IMR-90 (cell line): ENCODE measurements at regions of chr14 and their contacts with region 1.

Region 1: GRCh38 chr14:93173943-93174395 is 10.7 kb downstream of the MOAP1 start:
- DNase-seq: peak; percentile 22
- ATAC-seq: peak; percentile 42
- H3K4me3 ChIP-seq: no peak overlapping the region
- H3K27ac ChIP-seq: no peak overlapping the region
- H3K4me1 ChIP-seq: no peaks in the 10 kb centered on the region
- H3K27me3 ChIP-seq: peaks cover 9% of the 10 kb centered on the region
- CTCF ChIP-seq: no peak
- POLR2A ChIP-seq: no peak
- RAD21 ChIP-seq: no peak

Region 2: GRCh38 chr14:93375673-93376156 is 201.7 kb after region 1 on chr14:
- CTCF ChIA-PET with region 1: no interaction called
- POLR2A ChIA-PET with region 1: interaction called, 17 read pairs
- dilution Hi-C with region 1: no loop called
- in situ Hi-C with region 1: no loop called
- intact Hi-C with region 1: no loop called
- DNase-seq: no peak
- ATAC-seq: no peak
- H3K4me3 ChIP-seq: no peak overlapping the region
- H3K27ac ChIP-seq: no peak overlapping the region
- H3K4me1 ChIP-seq: no peaks in the 10 kb centered on the region
- H3K27me3 ChIP-seq: no peaks in the 10 kb centered on the region
- CTCF ChIP-seq: no peak
- POLR2A ChIP-seq: no peak
- RAD21 ChIP-seq: no peak

Region 3: DNA sequence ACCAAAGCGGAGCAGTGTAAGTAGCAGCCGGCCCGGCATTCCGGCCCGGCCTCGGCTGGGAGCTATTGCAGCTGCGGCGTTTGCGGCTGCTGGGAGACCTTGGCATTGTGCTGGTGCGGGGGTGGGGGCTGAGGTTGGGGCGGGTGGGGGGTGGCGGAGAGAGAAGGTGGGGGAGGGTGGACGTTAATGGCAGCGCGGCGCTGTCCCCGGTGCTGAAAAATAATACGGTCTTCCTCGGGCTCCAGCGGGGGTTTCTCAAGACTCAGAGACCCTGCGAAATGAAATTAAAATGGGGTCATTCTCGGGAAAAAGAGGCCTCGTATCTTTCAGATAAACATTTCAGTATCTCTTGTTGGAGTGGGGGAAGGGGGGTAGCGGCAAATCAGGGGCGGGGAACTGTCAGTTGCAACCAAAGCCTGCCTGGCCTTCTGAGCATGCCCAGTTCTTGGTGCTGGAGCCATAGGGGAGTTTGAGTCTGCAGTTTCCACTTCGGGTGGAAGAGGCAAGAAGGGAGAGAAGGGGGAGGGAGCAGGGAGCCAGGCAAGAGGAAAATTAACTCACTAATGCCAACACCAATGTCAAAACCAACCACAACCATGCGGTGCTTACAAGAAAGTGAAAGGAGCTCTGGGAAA is 257.2 kb after region 1 on chr14:
- CTCF ChIA-PET with region 1: no interaction called
- POLR2A ChIA-PET with region 1: no interaction called
- dilution Hi-C with region 1: no loop called
- in situ Hi-C with region 1: no loop called
- intact Hi-C with region 1: no loop called
- DNase-seq: no peak
- ATAC-seq: peak; percentile 21; the same call in 1 of the 2 replicates
- H3K4me3 ChIP-seq: no peak overlapping the region
- H3K27ac ChIP-seq: no peak overlapping the region
- H3K4me1 ChIP-seq: no peaks in the 10 kb centered on the region; the same call in 1 of the 2 replicates
- H3K27me3 ChIP-seq: no peaks in the 10 kb centered on the region
- CTCF ChIP-seq: no peak
- POLR2A ChIP-seq: no peak
- RAD21 ChIP-seq: no peak